ENCODE measurements at regions of chr16 and their contacts with region 1.

Region 1: DNA sequence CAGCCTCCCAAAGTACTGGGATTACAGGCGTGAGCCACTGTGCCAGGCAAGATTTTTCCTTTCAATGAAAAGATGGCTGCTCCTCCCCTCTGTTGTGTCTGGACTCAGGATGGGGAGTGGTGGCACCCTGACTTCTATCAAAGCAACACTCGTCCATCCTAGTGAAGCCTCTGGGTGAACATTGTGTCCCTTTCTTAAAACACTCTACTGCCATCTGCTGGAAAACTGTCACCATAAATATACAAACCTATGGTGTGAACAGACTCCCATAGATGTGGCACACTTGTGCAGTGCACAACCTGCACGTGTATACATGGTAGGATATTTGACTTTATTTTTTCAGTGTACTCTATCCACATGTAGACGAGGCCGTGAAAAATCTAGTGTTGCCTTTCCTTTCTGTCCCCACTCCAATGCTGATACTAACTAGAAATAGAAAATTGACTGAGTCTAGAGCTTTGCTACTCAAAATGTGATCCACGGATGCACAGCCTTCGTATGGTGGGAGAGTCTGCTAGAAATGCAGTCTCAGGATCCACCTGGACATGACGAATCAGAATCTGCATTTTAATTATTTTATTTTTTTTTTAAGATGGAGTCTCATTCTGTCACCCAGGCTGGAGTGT is 55.9 kb upstream of the PLCG2 start:
- DNase-seq: no peak
- H3K4me3 ChIP-seq: no peak overlapping the region
- H3K27ac ChIP-seq: no peak overlapping the region
- H3K4me1 ChIP-seq: peaks cover 8% of the 10 kb centered on the region
- H3K27me3 ChIP-seq: peaks cover 26% of the 10 kb centered on the region
- CTCF ChIP-seq: peak; percentile 84

Region 2: DNA sequence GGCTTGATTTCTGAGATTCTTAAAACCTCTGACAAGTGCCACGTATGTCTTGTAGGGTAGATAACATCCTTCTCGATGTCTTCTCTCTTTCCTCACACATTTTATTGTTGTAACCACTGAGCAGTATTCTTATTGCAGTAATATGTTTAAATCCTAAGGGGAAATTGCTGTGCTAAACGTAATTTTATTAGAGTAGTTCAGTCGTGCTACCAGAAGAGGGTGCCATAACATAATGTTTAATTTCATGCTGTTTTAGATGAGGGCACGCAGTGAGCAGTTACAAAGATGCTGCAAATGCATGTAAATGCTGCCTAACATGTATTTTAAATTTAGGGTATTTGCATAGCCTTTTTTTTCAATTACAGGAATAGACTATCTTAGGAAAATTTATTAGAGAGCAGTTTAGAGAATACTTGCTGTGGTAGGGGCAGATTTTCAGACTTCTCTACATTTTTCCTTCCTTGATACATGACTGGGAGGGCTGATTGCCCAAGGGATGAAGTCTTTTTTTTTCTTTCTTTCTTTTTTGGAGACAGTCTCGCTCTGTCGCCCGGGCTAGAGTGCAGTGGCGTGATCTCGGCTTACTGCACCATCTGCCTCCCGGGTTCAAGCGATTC is 356.8 kb before region 1 on chr16:
- intact Hi-C with region 1: loop called (anchors 10 kb)
- DNase-seq: no peak
- H3K4me3 ChIP-seq: no peak overlapping the region
- H3K27ac ChIP-seq: no peak overlapping the region
- H3K4me1 ChIP-seq: peaks cover 16% of the 10 kb centered on the region
- H3K27me3 ChIP-seq: no peaks in the 10 kb centered on the region
- CTCF ChIP-seq: peak; percentile 76

Region 3: DNA sequence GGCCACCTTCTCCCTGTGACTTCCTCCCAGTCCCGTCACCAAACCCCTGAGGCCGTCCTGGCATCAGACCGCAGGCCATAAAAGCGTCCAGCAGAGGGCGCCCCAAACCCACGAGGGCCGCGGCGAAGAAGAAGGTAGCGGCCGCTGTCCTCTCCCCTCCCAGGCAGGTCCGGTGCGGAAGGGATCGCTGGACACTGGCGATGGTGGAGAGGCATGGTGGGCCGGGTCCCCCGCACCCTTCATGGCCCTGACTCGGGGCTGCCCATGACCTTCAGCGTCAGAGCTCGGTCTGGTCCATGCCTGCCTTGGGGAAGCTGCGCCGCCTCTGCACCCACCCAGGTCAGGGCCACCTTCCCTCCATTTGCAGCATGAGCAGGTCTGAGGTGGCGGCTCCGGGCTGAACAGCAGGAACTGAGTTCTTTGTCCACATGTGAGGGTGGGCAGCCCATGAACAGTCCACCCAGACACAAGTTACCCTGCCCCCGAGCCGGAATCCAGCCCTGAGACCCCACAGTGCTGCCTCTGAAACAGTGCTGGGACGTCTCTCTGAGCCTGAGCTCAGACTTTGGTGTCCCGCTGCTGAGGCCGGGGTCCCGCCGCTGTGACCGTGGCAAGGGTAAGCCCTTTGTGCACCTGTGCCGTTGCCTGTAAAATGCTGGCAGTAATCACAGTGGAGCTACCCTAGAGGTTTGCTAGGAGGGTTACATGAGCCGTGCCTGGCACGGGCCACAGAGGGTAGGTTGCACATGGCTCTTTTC is 319.4 kb before region 1 on chr16:
- intact Hi-C with region 1: loop called (anchors 2 kb)
- DNase-seq: peak; percentile 86
- H3K4me3 ChIP-seq: peak overlapping the region; percentile 49
- H3K27ac ChIP-seq: no peak overlapping the region
- H3K4me1 ChIP-seq: peaks cover 20% of the 10 kb centered on the region
- H3K27me3 ChIP-seq: peaks cover 27% of the 10 kb centered on the region
- CTCF ChIP-seq: peak; percentile 98

Region 4: DNA sequence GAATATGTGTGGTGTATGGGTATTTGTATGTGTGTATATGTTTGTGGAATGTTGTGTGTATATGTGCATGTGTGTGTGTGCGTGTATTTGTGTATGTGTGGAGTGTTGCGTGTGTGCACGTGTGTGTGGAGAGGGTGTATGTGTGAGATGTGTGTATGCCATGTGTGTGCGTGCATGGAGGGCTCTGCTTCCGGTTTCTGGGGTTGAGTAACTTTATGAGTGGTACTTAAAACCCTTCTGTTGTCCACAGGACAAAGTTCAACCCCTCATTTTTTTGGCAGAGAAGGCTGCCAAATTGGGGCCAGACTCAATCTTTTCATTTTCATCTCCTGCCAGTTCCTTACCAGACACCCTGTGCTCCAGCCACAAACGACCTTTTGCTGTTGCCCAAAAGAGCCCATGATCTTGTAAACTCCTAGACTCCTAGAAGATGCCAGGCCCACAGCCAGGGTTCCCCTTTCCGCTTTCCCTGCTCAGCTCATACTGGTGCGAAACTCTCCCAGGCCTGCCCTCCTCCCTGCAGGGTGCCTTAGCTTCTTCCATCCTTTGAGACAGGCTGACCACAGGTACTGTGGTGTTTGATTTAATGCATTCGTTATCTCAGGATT is 178.4 kb before region 1 on chr16:
- intact Hi-C with region 1: no loop called
- DNase-seq: no peak
- H3K4me3 ChIP-seq: no peak overlapping the region
- H3K27ac ChIP-seq: no peak overlapping the region
- H3K4me1 ChIP-seq: peaks cover 40% of the 10 kb centered on the region
- H3K27me3 ChIP-seq: no peaks in the 10 kb centered on the region
- CTCF ChIP-seq: no peak

Region 5: DNA sequence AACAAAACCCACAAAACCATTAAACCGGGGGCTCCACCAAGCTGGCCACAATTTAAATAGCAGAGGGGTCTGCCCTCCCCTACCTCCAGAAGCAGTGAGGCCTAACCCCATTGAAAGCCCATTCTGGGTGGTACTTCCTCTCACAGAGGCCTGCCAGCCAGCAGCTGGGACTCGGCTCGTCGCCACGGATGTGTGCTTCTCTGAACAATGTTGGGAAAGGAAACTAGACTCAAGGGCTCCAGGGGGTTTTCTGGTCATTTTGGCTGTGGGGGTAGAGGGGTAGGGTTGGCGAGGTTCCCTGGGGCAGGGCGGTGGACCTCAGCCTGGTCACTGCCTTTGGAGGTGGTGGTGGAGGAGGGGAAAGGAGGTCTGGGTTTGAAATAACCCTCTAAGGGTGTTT is 51.1 kb after region 1 on chr16:
- intact Hi-C with region 1: no loop called
- DNase-seq: no peak
- H3K4me3 ChIP-seq: no peak overlapping the region
- H3K27ac ChIP-seq: peak overlapping the region; percentile 66
- H3K4me1 ChIP-seq: peaks cover 19% of the 10 kb centered on the region
- H3K27me3 ChIP-seq: peaks cover 22% of the 10 kb centered on the region
- CTCF ChIP-seq: no peak